ENCODE measurements at regions of chr19 and their contacts with region 1.

Region 1: DNA sequence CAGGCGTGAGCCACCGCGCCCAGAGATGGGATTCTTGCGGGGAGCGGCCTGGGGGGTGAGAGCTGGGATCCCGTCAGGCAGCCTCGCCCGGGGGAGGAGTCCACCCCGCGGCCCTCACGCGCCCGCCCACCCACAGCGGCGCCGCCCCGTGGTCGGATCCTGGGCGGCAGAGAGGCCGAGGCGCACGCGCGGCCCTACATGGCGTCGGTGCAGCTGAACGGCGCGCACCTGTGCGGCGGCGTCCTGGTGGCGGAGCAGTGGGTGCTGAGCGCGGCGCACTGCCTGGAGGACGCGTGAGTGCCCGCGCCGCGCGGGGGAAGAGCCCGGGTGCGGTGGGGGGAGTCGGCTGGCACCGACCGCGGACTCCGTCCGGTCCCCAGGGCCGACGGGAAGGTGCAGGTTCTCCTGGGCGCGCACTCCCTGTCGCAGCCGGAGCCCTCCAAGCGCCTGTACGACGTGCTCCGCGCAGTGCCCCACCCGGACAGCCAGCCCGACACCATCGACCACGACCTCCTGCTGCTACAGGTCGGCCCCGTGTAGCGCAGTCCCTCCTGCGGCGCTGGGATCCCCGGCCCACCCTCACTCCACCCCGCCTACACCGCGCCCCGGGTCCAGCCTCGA is 1.1 kb downstream of the CFD start:
- DNase-seq: peak; percentile 75
- H3K4me3 ChIP-seq: peak overlapping the region; percentile 51
- H3K27ac ChIP-seq: no peak overlapping the region
- H3K4me1 ChIP-seq: peaks cover 9% of the 10 kb centered on the region
- H3K27me3 ChIP-seq: no peaks in the 10 kb centered on the region
- CTCF ChIP-seq: 0 out of 2 replicates have a peak, but pooled peaks have one; percentile 17

Region 2: DNA sequence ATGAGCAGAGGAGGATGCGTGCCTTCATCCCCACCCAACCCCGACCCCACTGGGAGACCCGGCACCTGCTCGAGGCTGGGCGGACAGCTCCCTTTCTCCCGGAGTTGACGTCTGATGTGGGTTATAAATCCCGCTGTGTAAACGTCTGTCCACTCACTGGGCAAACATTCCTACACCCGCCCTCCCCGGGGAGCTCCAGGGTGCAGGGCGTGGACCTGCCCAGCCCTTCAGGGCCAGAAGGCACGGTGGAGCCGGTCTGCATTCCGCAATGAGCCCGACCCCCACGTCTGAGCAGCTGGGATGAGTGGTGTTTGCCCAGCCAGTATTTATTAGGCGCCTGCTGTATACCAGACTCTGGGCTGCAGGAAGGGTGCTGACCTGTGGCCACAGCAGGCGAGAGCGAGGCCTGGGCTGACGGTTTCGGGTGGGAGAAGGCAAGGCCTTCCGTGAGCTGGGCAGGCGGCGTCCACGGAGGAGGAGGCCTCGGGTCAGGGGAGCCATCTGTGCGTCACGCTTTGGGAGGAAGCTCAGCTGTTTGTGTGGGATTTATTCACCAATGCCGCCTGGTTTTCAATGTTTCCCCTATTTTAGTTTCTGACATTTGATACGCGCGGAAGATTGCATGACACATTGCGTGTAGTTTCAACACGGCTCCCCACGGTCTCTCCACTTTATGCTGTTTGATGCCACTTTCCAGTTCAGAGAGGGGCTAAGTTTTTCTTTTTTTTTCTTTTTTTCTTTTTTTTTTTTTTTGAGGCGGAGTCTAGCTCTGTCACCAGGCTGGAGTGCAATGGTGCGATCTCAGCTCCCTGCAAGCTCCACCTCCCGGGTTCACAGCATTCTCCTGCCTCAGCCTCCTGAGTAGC is 107.7 kb before region 1 on chr19:
- CTCF ChIA-PET with region 1: no interaction called
- POLR2A ChIA-PET with region 1: interaction called, 11 read pairs
- intact Hi-C with region 1: no loop called
- DNase-seq: peak; percentile 58
- H3K4me3 ChIP-seq: no peak overlapping the region
- H3K27ac ChIP-seq: no peak overlapping the region
- H3K4me1 ChIP-seq: no peaks in the 10 kb centered on the region
- H3K27me3 ChIP-seq: no peaks in the 10 kb centered on the region
- CTCF ChIP-seq: no peak

Region 3: GRCh38 chr19:920051-920864 is 59.7 kb after region 1 on chr19:
- CTCF ChIA-PET with region 1: no interaction called
- POLR2A ChIA-PET with region 1: no interaction called
- intact Hi-C with region 1: loop called (anchors 2 kb)
- DNase-seq: peak; percentile 65
- H3K4me3 ChIP-seq: peak overlapping the region; percentile 43
- H3K27ac ChIP-seq: no peak overlapping the region
- H3K4me1 ChIP-seq: peaks cover 30% of the 10 kb centered on the region
- H3K27me3 ChIP-seq: peaks cover 37% of the 10 kb centered on the region
- CTCF ChIP-seq: no peak

Region 4: GRCh38 chr19:984165-984967 is 123.8 kb after region 1 on chr19 and contains the start of gene WDR18:
- CTCF ChIA-PET with region 1: interaction called, 4 read pairs
- POLR2A ChIA-PET with region 1: no interaction called
- intact Hi-C with region 1: loop called (anchors 5 kb)
- DNase-seq: peak; percentile 96
- H3K4me3 ChIP-seq: peak within 1 kb of the TSS; percentile 80
- H3K27ac ChIP-seq: peak within 1 kb of the TSS; percentile 98
- H3K4me1 ChIP-seq: peaks cover 13% of the 10 kb centered on the region
- H3K27me3 ChIP-seq: no peaks in the 10 kb centered on the region
- CTCF ChIP-seq: no peak
- total RNA-seq, gene WDR18: 109 and 116 TPM in 2 replicates

Region 5: GRCh38 chr19:1249298-1249989 is 388.9 kb after region 1 on chr19:
- CTCF ChIA-PET with region 1: interaction called, 3 read pairs
- POLR2A ChIA-PET with region 1: no interaction called
- intact Hi-C with region 1: loop called (anchors 10 kb)
- DNase-seq: peak; percentile 98
- H3K4me3 ChIP-seq: peak overlapping the region; percentile 96
- H3K27ac ChIP-seq: peak overlapping the region; percentile 99
- H3K4me1 ChIP-seq: peaks cover 25% of the 10 kb centered on the region
- H3K27me3 ChIP-seq: no peaks in the 10 kb centered on the region
- CTCF ChIP-seq: no peak